AG04450 (cell line): ENCODE measurements at regions of chr7 and their contacts with region 1.

Region 1: DNA sequence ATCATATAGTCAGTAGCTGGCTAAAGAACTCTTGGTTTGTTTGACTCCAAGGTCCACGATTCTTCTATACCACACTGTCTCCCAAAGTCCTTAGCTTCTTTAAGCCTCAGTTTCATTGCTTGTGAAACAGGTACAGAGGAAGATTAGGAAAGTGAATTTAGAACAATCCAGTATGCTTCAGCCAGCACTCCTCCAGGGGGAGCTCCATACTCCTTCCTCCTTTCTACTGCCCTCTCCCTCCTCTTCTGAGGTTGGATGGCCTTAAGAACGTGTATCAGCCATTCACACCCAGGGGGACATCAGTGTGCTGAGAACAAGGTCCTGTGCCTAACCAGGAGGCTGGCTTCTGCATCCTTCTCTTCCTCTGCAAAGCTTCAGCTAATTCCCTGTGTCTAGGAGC is 54.8 kb upstream of the CALD1 start:
- DNase-seq: no peak
- H3K4me3 ChIP-seq: no peak overlapping the region
- H3K27ac ChIP-seq: no peak overlapping the region
- H3K27me3 ChIP-seq: no peaks in the 10 kb centered on the region
- CTCF ChIP-seq: peak; percentile 66

Region 2: DNA sequence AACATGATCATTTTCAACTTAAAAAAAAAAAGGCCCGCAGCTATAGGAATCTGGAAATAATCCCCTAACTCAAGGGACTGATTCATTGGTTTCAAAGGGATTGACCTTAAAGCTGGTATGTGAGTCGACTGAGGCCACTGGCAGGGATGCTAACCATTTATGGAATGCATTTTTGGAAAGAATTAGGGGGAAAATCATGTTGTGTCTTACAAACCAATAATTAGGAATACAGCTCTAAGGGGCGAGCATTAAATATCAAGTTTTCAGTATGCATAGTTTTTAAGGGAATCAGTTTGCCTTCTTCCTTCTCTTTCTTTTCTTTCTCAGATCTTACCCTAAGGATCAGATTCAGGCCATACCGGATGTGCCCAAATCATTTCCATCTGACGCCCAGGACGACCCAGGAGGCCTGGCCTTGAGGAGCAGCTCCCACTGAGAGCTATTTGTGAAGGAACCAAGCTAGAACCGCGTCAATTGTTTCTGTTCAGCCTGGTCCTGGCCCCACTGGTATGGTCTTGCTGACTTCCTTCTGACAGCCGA is 29.2 kb before region 1 on chr7:
- CTCF ChIA-PET with region 1: interaction called, 19 read pairs
- POLR2A ChIA-PET with region 1: interaction called, 4 read pairs
- DNase-seq: no peak
- H3K4me3 ChIP-seq: no peak overlapping the region
- H3K27ac ChIP-seq: no peak overlapping the region
- H3K27me3 ChIP-seq: no peaks in the 10 kb centered on the region
- CTCF ChIP-seq: no peak

Region 3: DNA sequence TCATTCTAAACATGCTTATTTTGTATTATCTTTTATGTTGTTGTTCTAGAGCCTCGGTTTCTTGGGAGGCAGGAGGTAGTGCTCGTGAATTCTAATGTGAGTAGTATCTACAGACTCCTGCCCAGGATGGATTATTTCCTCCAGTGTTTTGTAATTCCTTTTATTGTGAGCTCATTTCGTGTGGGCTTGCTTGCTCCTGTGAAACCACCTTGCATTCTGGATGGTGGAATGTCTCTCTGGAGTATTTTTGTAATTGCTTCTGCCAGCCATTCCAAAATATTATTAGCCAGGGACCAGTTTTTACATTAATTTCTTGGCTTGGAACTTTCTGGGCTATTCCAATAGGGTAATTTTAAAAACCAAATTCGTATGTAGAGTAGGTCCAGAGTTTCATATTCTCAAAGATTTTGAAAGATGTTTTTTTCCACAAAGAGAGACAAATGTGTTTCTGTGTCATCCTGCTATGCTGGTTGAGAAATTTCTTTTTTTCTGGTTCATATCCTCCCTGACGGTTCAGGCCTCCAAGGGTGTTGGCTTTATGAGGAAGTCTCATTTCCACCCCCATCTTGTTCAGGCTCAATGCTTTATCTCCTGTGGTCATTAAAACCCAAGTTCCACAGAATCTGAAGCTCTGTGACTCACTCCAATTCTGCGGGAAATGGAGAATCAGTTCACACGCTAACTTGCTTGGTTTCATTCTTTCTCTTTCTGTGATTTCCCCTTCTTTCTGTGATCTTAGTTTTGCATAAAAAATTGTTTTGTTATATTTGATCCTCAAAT is 13.2 kb after region 1 on chr7:
- CTCF ChIA-PET with region 1: interaction called, 12 read pairs
- POLR2A ChIA-PET with region 1: no interaction called
- DNase-seq: no peak
- H3K4me3 ChIP-seq: no peak overlapping the region
- H3K27ac ChIP-seq: no peak overlapping the region
- H3K27me3 ChIP-seq: no peaks in the 10 kb centered on the region
- CTCF ChIP-seq: no peak

Region 4: DNA sequence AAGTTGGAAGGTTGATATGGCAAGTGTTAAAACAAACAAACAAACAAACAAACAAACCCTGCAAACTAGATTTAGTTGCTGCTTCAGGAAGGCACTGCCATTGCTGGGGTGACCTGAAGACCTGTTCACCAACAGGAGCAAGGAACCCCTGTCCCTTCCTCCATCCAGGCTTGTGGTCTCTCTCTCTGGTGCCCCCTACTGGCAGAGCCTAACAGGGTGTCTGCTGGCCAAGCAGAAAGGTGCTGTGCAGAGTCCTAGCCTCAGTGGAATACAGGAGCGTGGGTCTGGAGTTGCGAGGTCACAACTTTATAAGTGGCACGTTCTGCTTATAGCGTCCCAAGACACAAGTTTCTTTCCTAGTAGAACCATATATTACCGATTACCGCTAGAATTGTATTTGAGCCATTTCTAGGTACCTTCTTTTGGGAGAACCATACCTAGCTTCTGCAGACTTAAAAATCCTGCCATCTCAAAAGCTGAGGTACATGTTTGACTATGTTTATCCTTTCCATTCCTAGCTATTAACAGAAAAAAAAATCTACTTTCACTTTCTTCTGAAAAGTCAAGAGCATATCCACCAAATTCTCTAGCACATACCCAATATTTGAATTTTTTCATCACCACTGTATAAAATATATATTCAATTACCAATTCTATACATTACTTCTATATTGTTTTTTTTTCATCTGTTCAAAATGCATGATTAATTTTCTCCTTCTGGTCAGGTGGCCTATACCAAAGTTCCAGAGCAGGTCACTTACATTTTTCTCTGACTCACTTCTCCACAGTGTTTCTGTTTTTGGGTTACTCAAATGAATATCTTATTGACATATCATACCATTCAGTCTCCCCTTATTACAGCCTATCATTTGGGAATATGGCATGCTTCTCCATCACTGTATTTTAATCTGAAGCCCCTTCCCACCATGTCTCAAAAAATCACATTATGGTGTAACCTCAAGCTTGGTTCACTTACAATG is 25.8 kb after region 1 on chr7:
- CTCF ChIA-PET with region 1: interaction called, 15 read pairs
- POLR2A ChIA-PET with region 1: no interaction called
- DNase-seq: no peak
- H3K4me3 ChIP-seq: no peak overlapping the region
- H3K27ac ChIP-seq: no peak overlapping the region
- H3K27me3 ChIP-seq: no peaks in the 10 kb centered on the region
- CTCF ChIP-seq: peak; percentile 62

Region 5: DNA sequence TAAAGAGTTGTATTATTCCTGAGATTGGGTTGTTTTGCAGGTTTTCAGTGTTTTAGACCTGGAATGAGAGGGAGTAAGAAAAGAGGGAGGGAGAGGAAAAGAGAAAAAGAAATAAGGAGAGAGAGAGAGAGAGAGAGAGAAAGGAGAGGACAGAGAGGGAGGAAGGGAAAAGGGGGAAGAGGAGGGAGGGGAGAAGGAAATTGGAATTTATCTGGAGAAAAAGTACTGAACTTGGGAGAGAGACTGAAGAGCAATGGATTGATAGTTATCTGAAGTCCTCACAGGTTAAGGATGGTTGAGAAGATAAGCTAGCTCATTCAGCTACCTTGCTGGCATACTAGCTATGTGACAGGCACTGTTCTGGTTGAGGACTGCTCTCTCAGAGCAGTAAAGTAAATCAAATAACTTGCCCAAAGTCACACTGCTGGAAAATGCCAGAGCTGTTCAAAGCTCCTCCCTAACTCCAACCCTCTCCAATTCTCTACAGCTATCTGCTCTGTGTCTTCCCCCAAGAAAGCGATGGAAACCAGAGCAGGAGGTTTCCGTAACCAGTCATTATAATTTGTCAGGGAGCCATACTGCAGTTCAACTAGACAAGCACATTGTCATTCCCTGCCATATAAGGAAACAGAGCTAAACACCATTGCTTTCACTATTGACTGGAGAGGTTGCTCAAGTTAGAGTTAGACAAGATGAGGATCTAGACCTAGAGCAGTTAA is 65.5 kb after region 1 on chr7:
- CTCF ChIA-PET with region 1: interaction called, 12 read pairs
- POLR2A ChIA-PET with region 1: no interaction called
- DNase-seq: peak; percentile 63
- H3K4me3 ChIP-seq: peak overlapping the region; percentile 10
- H3K27ac ChIP-seq: peak overlapping the region; percentile 59
- H3K27me3 ChIP-seq: no peaks in the 10 kb centered on the region
- CTCF ChIP-seq: no peak